Activated naive CD4-positive, alpha-beta T cell treated with anti-CD3 and anti-CD28 coated beads for 36 hours (primary cell): ENCODE measurements at regions of chr17 and their contacts with region 1.

Region 1: DNA sequence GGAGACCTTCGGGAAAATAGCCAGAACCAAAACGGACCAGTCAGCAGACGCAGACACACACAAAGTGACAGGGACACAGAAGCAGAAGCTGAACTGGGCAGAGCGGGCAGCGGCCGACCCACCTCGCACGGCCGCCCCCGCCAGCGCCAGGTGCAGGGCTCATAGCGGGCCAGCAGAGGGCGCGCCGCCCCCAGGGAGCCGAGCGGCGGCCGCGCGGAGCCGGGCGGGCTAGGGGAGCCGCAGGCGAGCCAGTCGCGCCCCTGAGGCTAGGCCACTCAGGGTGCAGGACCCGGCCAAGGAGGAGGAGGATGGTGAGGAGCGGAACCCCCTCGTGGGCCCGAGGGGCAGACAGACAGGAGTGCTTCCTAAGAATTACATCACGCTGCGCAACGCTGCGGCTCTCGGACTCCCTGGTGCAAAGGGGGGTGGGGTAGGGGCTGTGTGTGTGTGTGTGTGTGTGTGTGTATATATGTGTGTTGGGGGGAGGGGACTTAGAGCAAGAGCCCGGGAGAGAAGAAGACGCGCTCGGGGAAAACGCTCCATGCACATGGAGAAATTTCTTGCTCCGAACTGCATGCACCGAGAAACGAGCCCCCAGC is 913 bp upstream of the NOG start:
- DNase-seq: peak; percentile 66
- H3K4me3 Mint-ChIP-seq: peak overlapping the region; percentile 79
- H3K27ac Mint-ChIP-seq: no peak overlapping the region
- H3K4me1 Mint-ChIP-seq: peaks cover 17% of the 10 kb centered on the region
- H3K27me3 Mint-ChIP-seq: no peaks in the 10 kb centered on the region

Region 2: DNA sequence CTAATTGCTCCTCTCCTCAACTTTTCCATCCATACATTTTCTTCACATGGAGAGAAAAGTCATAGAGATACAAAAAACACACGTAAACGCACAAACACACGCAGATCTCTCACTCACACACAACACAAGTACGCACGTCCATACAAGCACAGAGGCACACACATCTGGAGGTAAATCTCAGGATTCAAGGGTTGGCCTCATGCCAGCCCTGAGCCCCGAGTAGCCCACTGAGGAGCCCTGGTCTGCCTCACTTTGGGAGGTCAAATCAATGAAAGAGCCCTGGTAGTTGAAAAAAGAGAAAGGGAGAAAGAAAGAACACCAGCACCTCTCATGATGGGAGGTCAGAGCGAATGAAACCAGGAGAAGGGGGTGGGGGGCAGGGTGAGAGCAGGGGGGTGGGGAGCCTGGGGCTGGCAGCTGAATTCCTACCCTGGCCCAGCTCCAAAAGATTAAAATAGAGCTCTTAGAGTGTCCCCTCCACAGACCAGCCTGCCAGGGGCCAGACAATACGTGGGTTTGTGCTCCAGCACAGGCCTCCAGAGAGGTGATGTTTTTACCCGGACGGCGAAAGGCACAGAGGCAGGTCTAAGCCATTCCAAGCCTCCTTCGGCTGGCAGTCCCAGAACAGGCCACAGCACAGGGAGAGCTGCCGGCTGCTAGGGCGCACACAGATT is 71.3 kb before region 1 on chr17:
- CTCF ChIA-PET with region 1: no interaction called
- intact Hi-C with region 1: no loop called
- DNase-seq: no peak
- H3K4me3 Mint-ChIP-seq: no peak overlapping the region
- H3K27ac Mint-ChIP-seq: no peak overlapping the region
- H3K4me1 Mint-ChIP-seq: no peaks in the 10 kb centered on the region
- H3K27me3 Mint-ChIP-seq: peaks cover 8% of the 10 kb centered on the region

Region 3: DNA sequence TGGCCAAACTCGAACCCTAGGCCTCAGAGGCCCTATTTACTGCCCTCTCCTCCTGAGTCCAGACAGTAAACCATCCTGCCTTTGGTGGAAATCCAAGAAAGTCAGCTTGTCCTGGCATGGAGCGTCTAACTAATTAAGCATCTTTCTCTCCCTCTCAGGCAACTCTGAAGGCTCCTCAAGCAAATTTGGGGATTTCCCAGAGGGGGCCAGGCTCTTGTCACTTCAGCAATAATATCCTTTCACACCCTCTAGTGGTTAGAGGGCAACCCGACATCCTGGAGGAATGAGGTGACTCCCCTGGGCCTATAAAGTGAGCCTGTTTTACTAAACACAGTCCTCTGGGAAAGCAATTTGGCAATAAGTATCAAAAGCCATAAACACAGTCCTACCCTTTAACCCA is 61.3 kb after region 1 on chr17:
- CTCF ChIA-PET with region 1: interaction called, 72 read pairs
- intact Hi-C with region 1: loop called (anchors 1 kb)
- DNase-seq: peak; percentile 90
- H3K4me3 Mint-ChIP-seq: no peak overlapping the region
- H3K27ac Mint-ChIP-seq: no peak overlapping the region
- H3K4me1 Mint-ChIP-seq: peaks cover 5% of the 10 kb centered on the region
- H3K27me3 Mint-ChIP-seq: no peaks in the 10 kb centered on the region

Region 4: GRCh38 chr17:56762988-56763387 is 170.4 kb after region 1 on chr17:
- CTCF ChIA-PET with region 1: interaction called, 4 read pairs
- intact Hi-C with region 1: loop called (anchors 5 kb)
- DNase-seq: peak; percentile 37
- H3K4me3 Mint-ChIP-seq: peak overlapping the region; percentile 26
- H3K27ac Mint-ChIP-seq: peak overlapping the region; percentile 75
- H3K4me1 Mint-ChIP-seq: peaks cover 25% of the 10 kb centered on the region
- H3K27me3 Mint-ChIP-seq: no peaks in the 10 kb centered on the region

Region 5: GRCh38 chr17:56960596-56961538 is 368.3 kb after region 1 on chr17 and contains the start of gene COIL:
- CTCF ChIA-PET with region 1: no interaction called
- intact Hi-C with region 1: loop called (anchors 5 kb)
- DNase-seq: peak; percentile 97
- H3K4me3 Mint-ChIP-seq: peak within 1 kb of the TSS; percentile 80
- H3K27ac Mint-ChIP-seq: peak within 1 kb of the TSS; percentile 81
- H3K4me1 Mint-ChIP-seq: peaks cover 25% of the 10 kb centered on the region
- H3K27me3 Mint-ChIP-seq: no peaks in the 10 kb centered on the region
- total RNA-seq, gene COIL: 16.9 to 18.2 TPM